ENCODE measurements at regions of chr16 and their contacts with region 1.

Region 1: GRCh38 chr16:18801197-18801972 is at the start of gene ARL6IP1:
- DNase-seq: peak; percentile 96 to 100 (median 99)
- ATAC-seq: peak; percentile 94
- H3K4me3 ChIP-seq: peak within 1 kb of the TSS; percentile 86 to 98
- H3K4me3 Mint-ChIP-seq: peak within 1 kb of the TSS; percentile 97
- H3K27ac ChIP-seq: peak within 1 kb of the TSS; percentile 84 to 92
- H3K27ac Mint-ChIP-seq: peak within 1 kb of the TSS; percentile 97
- H3K4me1 ChIP-seq: peaks cover 44% of the 10 kb centered on the region
- H3K4me1 Mint-ChIP-seq: peaks cover 50% of the 10 kb centered on the region
- H3K27me3 ChIP-seq: no peaks in the 10 kb centered on the region
- H3K27me3 Mint-ChIP-seq: no peaks in the 10 kb centered on the region
- CTCF ChIP-seq: peak; percentile 75
- total RNA-seq, gene ARL6IP1: 137 to 138 TPM

Region 2: GRCh38 chr16:18782697-18783429 is 18.5 kb before region 1 on chr16:
- CTCF ChIA-PET with region 1: interaction called, 56 read pairs
- POLR2A ChIA-PET with region 1: interaction called, 98 read pairs
- intact Hi-C with region 1: no loop called
- DNase-seq: peak in 3 of 9 experiments; percentile 32 to 53 (median 39)
- ATAC-seq: peak; percentile 72
- H3K4me3 ChIP-seq: no peak overlapping the region
- H3K4me3 Mint-ChIP-seq: no peak overlapping the region
- H3K27ac ChIP-seq: peak overlapping the region in 1 of 2 experiments; percentile 76
- H3K27ac Mint-ChIP-seq: peak overlapping the region; percentile 41
- H3K4me1 ChIP-seq: peaks cover 30% of the 10 kb centered on the region
- H3K4me1 Mint-ChIP-seq: peaks cover 48% of the 10 kb centered on the region
- H3K27me3 ChIP-seq: no peaks in the 10 kb centered on the region
- H3K27me3 Mint-ChIP-seq: no peaks in the 10 kb centered on the region
- CTCF ChIP-seq: no peak

Region 3: GRCh38 chr16:18789850-18790724 is 11.3 kb before region 1 on chr16 and contains the start of gene RPS15A:
- CTCF ChIA-PET with region 1: interaction called, 56 read pairs
- POLR2A ChIA-PET with region 1: interaction called, 98 read pairs
- intact Hi-C with region 1: loop called (anchors 1 kb)
- DNase-seq: peak; percentile 81 to 99 (median 91)
- ATAC-seq: peak; percentile 96
- H3K4me3 ChIP-seq: peak within 1 kb of the TSS; percentile 98 to 100
- H3K4me3 Mint-ChIP-seq: peak within 1 kb of the TSS; percentile 95
- H3K27ac ChIP-seq: peak within 1 kb of the TSS; percentile 76 to 88
- H3K27ac Mint-ChIP-seq: peak within 1 kb of the TSS; percentile 88
- H3K4me1 ChIP-seq: peaks cover 39% of the 10 kb centered on the region
- H3K4me1 Mint-ChIP-seq: peaks cover 50% of the 10 kb centered on the region
- H3K27me3 ChIP-seq: no peaks in the 10 kb centered on the region
- H3K27me3 Mint-ChIP-seq: no peaks in the 10 kb centered on the region
- CTCF ChIP-seq: no peak
- total RNA-seq, gene RPS15A: 3,671 to 3,755 TPM

Region 4: DNA sequence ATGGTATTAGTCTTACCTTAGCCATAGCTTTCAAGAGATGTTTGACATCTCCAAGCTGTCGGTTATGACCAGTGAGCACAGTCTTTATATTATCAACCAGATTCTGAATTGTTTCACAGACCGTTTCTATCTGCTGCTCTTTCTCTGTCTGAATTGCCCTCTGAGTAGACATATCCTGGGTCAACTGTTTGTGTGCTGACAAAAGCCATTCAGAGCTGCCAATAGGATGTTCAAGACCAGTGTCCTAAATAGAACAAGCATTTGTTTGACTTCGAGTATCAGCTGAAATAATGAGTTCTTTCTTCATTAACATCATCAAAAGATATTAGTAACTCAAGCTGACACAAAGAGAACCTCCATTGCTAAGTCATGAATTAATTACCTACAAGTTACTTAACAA is 14.9 kb after region 1 on chr16:
- CTCF ChIA-PET with region 1: interaction called, 8 read pairs
- POLR2A ChIA-PET with region 1: interaction called, 18 read pairs
- intact Hi-C with region 1: no loop called
- DNase-seq: no peak
- ATAC-seq: no peak
- H3K4me3 ChIP-seq: no peak overlapping the region
- H3K4me3 Mint-ChIP-seq: no peak overlapping the region
- H3K27ac ChIP-seq: no peak overlapping the region
- H3K27ac Mint-ChIP-seq: peak overlapping the region; percentile 37
- H3K4me1 ChIP-seq: no peaks in the 10 kb centered on the region
- H3K4me1 Mint-ChIP-seq: peaks cover 13% of the 10 kb centered on the region
- H3K27me3 ChIP-seq: no peaks in the 10 kb centered on the region
- H3K27me3 Mint-ChIP-seq: no peaks in the 10 kb centered on the region
- CTCF ChIP-seq: no peak

Region 5: GRCh38 chr16:18969050-18969854 is 167.9 kb after region 1 on chr16:
- CTCF ChIA-PET with region 1: interaction called, 10 read pairs
- POLR2A ChIA-PET with region 1: no interaction called
- intact Hi-C with region 1: loop called (anchors 1 kb)
- DNase-seq: peak; percentile 58 to 89 (median 76)
- ATAC-seq: peak; percentile 81
- H3K4me3 ChIP-seq: no peak overlapping the region
- H3K4me3 Mint-ChIP-seq: no peak overlapping the region
- H3K27ac ChIP-seq: no peak overlapping the region
- H3K27ac Mint-ChIP-seq: no peak overlapping the region
- H3K4me1 ChIP-seq: no peaks in the 10 kb centered on the region
- H3K4me1 Mint-ChIP-seq: peaks cover 5% of the 10 kb centered on the region
- H3K27me3 ChIP-seq: no peaks in the 10 kb centered on the region
- H3K27me3 Mint-ChIP-seq: no peaks in the 10 kb centered on the region
- CTCF ChIP-seq: peak; percentile 97

Region 6: GRCh38 chr16:19521471-19522396 is 720.3 kb after region 1 on chr16 and contains the start of gene GDE1:
- CTCF ChIA-PET with region 1: no interaction called
- POLR2A ChIA-PET with region 1: interaction called, 5 read pairs
- intact Hi-C with region 1: loop called (anchors 1 to 2 kb)
- DNase-seq: peak; percentile 76 to 96 (median 92)
- ATAC-seq: peak; percentile 74
- H3K4me3 ChIP-seq: peak within 1 kb of the TSS; percentile 62 to 85
- H3K4me3 Mint-ChIP-seq: peak within 1 kb of the TSS; percentile 93
- H3K27ac ChIP-seq: peak within 1 kb of the TSS; percentile 67 to 77
- H3K27ac Mint-ChIP-seq: peak within 1 kb of the TSS; percentile 92
- H3K4me1 ChIP-seq: peaks cover 32% of the 10 kb centered on the region
- H3K4me1 Mint-ChIP-seq: peaks cover 61% of the 10 kb centered on the region
- H3K27me3 ChIP-seq: no peaks in the 10 kb centered on the region
- H3K27me3 Mint-ChIP-seq: no peaks in the 10 kb centered on the region
- CTCF ChIP-seq: peak; percentile 22
- total RNA-seq, gene GDE1: 26.2 to 29.0 TPM

Measured in CD8-positive, alpha-beta T cell (primary cell).